ENCODE measurements at regions of chr5 and their contacts with region 1.

Region 1: DNA sequence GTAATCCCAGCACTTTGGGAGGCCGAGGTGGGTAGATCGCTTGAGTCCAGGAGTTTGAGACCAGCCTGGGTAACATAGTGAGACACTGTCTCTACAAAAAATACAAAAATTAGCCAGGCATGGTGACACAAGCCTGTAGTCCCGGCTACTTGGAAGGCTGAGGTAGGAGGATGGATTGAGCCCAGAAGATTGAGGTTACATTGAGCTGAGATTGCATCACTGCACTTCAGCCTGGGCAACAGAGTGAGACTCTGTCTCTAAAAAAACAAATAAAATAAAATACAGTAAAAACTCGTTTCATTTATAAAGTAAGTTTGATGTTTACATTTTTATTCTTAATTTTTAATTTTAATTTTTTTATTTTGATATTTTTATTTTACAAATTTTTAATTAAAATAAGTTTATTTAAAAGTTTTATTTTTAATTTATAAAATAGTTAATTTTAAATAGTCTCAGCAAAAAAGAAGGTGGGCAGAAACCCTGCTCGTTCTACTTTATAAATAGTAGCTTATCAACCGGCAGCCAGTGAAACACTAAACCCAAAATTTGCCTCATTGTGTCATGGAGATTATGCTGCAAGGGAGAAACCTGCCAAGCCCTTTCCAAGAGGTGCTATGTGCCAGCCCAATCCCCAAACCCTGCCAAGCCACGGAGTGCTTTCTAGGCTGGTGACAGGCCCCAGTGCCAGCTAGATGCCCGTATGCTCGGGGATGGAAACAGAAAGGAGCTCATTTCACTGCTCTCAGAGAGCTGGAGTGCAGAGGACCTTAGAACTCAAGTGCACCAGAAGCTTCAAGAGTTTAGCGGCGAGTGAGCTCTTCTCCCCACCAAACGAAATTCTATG is 38.9 kb downstream of the SERINC5 start:
- DNase-seq: peak in 3 of 9 experiments; percentile 28 to 45 (median 32)
- ATAC-seq: peak; percentile 27
- H3K4me3 ChIP-seq: peak overlapping the region in 1 of 2 experiments; percentile 31
- H3K4me3 Mint-ChIP-seq: peak overlapping the region; percentile 70
- H3K27ac ChIP-seq: peak overlapping the region; percentile 39 to 55
- H3K27ac Mint-ChIP-seq: peak overlapping the region; percentile 93
- H3K4me1 ChIP-seq: peaks cover 93% of the 10 kb centered on the region
- H3K4me1 Mint-ChIP-seq: peaks cover 92% of the 10 kb centered on the region
- H3K27me3 ChIP-seq: no peaks in the 10 kb centered on the region
- H3K27me3 Mint-ChIP-seq: no peaks in the 10 kb centered on the region
- CTCF ChIP-seq: no peak

Region 2: DNA sequence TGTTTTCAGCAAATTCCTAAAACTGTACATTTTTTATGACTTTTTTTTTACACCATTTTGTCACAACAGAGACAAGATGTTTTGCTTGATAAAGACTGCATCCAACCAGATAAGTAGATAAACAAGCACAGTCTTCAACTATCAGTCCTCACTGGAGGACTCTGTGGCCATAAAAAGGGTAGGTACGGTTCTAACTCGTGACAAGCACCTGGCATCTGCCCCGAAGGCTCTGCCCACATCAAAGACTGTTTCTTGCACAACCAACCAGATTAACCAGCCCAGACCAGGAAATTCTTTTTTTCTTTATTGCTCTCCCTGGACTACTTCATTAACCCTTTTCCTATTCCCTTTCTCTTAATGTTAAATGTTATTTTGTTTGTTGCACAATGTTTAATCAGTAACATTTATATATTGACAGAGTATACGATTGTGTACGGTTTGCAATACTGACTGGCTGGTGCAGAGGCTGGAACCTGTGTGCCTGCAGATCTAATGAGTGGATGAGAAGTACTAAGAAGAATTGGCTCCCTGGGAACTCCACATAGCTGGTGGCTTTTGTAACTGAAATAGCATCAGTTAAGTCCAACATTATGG is 35.3 kb before region 1 on chr5:
- CTCF ChIA-PET with region 1: interaction called, 4 read pairs
- POLR2A ChIA-PET with region 1: interaction called, 5 read pairs
- intact Hi-C with region 1: loop called in 1 of 2 experiments (anchors 5 kb)
- DNase-seq: peak in 7 of 9 experiments; percentile 42 to 85 (median 67)
- ATAC-seq: peak; percentile 32
- H3K4me3 ChIP-seq: peak overlapping the region in 1 of 2 experiments; percentile 3
- H3K4me3 Mint-ChIP-seq: peak overlapping the region; percentile 64
- H3K27ac ChIP-seq: peak overlapping the region; percentile 20 to 23
- H3K27ac Mint-ChIP-seq: peak overlapping the region; percentile 96
- H3K4me1 ChIP-seq: peaks cover 89% of the 10 kb centered on the region
- H3K4me1 Mint-ChIP-seq: peaks cover 87% of the 10 kb centered on the region
- H3K27me3 ChIP-seq: no peaks in the 10 kb centered on the region
- H3K27me3 Mint-ChIP-seq: no peaks in the 10 kb centered on the region
- CTCF ChIP-seq: no peak

Region 3: GRCh38 chr5:80204808-80205614 is 12.0 kb before region 1 on chr5:
- CTCF ChIA-PET with region 1: interaction called, 4 read pairs
- POLR2A ChIA-PET with region 1: interaction called, 19 read pairs
- intact Hi-C with region 1: loop called in 1 of 2 experiments (anchors 1 kb)
- DNase-seq: peak in 2 of 9 experiments; percentile 31 to 64
- ATAC-seq: peak; percentile 82
- H3K4me3 ChIP-seq: no peak overlapping the region
- H3K4me3 Mint-ChIP-seq: peak overlapping the region; percentile 47
- H3K27ac ChIP-seq: peak overlapping the region in 1 of 2 experiments; percentile 27
- H3K27ac Mint-ChIP-seq: peak overlapping the region; percentile 87
- H3K4me1 ChIP-seq: peaks cover 78% of the 10 kb centered on the region
- H3K4me1 Mint-ChIP-seq: peaks cover 88% of the 10 kb centered on the region
- H3K27me3 ChIP-seq: no peaks in the 10 kb centered on the region
- H3K27me3 Mint-ChIP-seq: no peaks in the 10 kb centered on the region
- CTCF ChIP-seq: peak; percentile 34

Region 4: GRCh38 chr5:80229902-80230255 is 12.9 kb after region 1 on chr5:
- CTCF ChIA-PET with region 1: no interaction called
- POLR2A ChIA-PET with region 1: no interaction called
- intact Hi-C with region 1: loop called in 1 of 2 experiments (anchors 2 kb)
- DNase-seq: no peak
- ATAC-seq: no peak
- H3K4me3 ChIP-seq: no peak overlapping the region
- H3K4me3 Mint-ChIP-seq: peak overlapping the region; percentile 18
- H3K27ac ChIP-seq: no peak overlapping the region
- H3K27ac Mint-ChIP-seq: peak overlapping the region; percentile 73
- H3K4me1 ChIP-seq: peaks cover 77% of the 10 kb centered on the region
- H3K4me1 Mint-ChIP-seq: peaks cover 79% of the 10 kb centered on the region
- H3K27me3 ChIP-seq: no peaks in the 10 kb centered on the region
- H3K27me3 Mint-ChIP-seq: no peaks in the 10 kb centered on the region
- CTCF ChIP-seq: no peak